CD4-positive, alpha-beta memory T cell (primary cell): ENCODE measurements at regions of chr17 and their contacts with region 1.

Region 1: GRCh38 chr17:60677308-60678124 is at the start of gene BCAS3:
- DNase-seq: peak; percentile 96 to 99 (median 97)
- H3K4me3 ChIP-seq: peak within 1 kb of the TSS; percentile 65 to 96
- H3K4me3 Mint-ChIP-seq: peak within 1 kb of the TSS; percentile 91 to 99 (median 97)
- H3K27ac ChIP-seq: peak within 1 kb of the TSS; percentile 72
- H3K27ac Mint-ChIP-seq: peak within 1 kb of the TSS; percentile 93 to 99 (median 98)
- H3K4me1 ChIP-seq: peaks cover 14% of the 10 kb centered on the region
- H3K4me1 Mint-ChIP-seq: peaks cover 17 to 26% (median 23%) of the 10 kb centered on the region in 4 donors
- H3K27me3 ChIP-seq: no peaks in the 10 kb centered on the region
- H3K27me3 Mint-ChIP-seq: no peaks in the 10 kb centered on the region
- total RNA-seq, gene BCAS3: 40.3 to 42.2 TPM

Region 2: DNA sequence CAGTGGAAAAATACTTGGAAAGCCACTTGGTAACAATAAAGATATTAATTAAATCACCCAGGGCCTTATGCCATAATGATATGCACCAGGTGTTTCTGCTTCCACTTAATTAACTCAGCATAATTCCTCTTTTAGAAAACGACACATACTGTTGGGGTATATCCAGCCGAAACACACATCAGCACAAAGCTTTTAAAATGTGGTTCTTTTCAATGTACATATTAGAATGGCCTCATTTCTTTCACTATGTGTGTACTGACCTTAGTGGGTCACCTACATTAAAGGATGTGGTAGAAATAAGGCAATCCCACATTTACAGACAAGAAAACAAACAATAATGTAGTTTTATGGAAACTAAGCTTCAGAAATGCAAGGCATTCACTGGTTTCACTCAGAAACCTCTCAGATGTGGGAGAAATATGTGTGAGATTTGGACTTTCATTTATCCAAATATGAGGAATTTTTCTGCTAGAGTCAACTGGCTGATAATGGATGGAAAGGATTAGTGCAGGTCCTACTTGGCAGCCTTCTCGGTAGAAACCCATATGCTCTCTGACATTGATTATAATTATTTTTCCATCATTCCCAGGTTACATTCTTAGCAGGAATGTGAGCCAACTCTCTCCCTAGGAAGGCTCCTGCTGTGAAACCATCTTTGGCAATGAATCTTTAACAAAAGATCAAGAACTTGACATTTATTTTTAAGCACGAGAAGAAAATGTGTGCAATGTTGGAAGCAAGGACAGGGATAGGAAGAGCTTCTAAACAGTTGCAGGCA is 1178.8 kb before region 1 on chr17:
- CTCF ChIA-PET with region 1: no interaction called
- POLR2A ChIA-PET with region 1: no interaction called
- intact Hi-C with region 1: no loop called
- DNase-seq: no peak
- H3K4me3 ChIP-seq: no peak overlapping the region
- H3K4me3 Mint-ChIP-seq: no peak overlapping the region
- H3K27ac ChIP-seq: no peak overlapping the region
- H3K27ac Mint-ChIP-seq: no peak overlapping the region
- H3K4me1 ChIP-seq: no peaks in the 10 kb centered on the region
- H3K4me1 Mint-ChIP-seq: no peaks in the 10 kb centered on the region
- H3K27me3 ChIP-seq: no peaks in the 10 kb centered on the region
- H3K27me3 Mint-ChIP-seq: peaks cover 0 to under 1% of the 10 kb centered on the region in 2 donors

Region 3: DNA sequence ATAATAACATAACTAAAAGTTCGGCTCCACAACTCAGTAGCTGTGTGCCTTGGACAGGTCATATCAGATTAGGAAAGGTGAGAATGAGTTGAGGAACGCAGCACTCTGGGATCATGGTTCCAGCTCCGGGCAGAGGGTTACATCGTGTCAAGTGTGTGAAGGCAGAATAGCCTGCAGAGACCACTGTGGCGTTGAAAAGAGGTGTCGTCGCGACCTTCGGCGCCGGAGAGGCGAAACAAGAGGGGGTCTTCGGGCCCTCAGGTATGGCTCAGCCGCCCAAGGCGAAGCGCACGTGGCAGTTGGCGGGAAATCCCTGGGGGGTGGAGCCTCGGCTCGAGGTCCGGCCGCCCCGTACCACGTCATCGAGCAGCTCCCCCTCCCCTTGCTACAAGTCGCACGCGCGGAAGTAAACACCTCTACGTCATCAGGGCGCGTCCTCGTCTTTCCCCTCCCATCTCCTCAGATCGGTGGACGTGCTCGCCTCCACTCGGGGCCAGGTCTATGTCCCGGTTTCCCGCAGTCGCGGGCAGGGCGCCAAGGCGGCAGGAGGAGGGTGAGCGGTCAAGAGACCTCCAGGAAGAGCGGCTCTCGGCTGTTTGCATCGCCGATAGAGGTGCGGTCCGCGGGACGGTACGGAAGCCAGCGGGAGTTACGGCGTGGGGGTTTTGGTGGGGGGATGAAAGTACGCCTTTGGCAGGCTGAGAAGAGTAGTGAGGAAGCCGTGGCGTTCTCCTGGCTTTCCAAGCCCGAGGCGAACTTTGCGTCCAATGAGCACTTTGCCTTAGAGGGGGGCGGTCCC is 1112.1 kb before region 1 on chr17 and contains the start of gene DHX40:
- CTCF ChIA-PET with region 1: no interaction called
- POLR2A ChIA-PET with region 1: interaction called, 3 read pairs
- intact Hi-C with region 1: loop called (anchors 10 kb)
- DNase-seq: peak; percentile 92 to 96 (median 93)
- H3K4me3 ChIP-seq: peak within 1 kb of the TSS; percentile 79 to 93
- H3K4me3 Mint-ChIP-seq: peak within 1 kb of the TSS; percentile 97 to 100 (median 100)
- H3K27ac ChIP-seq: peak within 1 kb of the TSS; percentile 93
- H3K27ac Mint-ChIP-seq: peak within 1 kb of the TSS; percentile 93 to 100 (median 100)
- H3K4me1 ChIP-seq: peaks cover 18% of the 10 kb centered on the region
- H3K4me1 Mint-ChIP-seq: peaks cover 15 to 25% (median 21%) of the 10 kb centered on the region in 4 donors
- H3K27me3 ChIP-seq: no peaks in the 10 kb centered on the region
- H3K27me3 Mint-ChIP-seq: no peaks in the 10 kb centered on the region
- total RNA-seq, gene DHX40: 25.4 to 29.9 TPM

Region 4: DNA sequence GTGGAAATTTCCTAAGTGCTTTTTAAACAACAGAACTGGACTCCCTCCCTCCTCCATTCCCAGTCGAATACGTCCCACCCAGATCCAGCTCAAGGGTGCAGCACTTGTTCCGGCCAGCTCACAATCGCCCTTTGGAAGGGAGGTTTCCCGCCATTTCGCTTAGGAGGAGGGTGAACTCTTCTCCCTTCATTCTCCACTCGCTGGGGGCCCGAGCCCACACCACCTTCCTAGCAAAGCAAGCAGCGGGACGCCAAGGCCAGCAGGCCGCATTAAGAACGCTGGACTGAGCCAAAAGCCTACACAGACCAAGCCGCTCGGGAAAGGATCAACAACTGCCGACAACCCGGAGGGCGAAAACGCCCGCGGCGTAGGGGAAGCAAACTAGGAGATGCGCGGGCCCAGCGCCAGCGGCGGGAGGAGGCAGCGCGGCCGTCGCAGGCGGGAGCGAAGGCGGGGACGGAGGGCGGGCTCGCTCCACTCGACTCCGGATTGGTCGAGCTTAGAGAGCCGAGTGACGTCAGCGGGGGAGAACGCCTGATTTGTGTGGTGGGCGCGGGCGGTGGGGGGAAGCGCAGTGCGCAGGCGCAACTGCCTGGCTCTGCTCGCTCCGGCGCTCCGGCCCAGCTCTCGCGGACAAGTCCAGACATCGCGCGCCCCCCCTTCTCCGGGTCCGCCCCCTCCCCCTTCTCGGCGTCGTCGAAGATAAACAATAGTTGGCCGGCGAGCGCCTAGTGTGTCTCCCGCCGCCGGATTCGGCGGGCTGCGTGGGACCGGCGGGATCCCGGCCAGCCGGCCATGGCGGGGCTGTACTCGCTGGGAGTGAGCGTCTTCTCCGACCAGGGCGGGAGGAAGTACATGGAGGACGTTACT is 77.7 kb before region 1 on chr17 and contains the start of gene PPM1D:
- CTCF ChIA-PET with region 1: no interaction called
- POLR2A ChIA-PET with region 1: interaction called, 24 read pairs
- intact Hi-C with region 1: loop called (anchors 1 kb)
- DNase-seq: peak; percentile 96 to 97 (median 96)
- H3K4me3 ChIP-seq: peak within 1 kb of the TSS; percentile 97 to 98
- H3K4me3 Mint-ChIP-seq: peak within 1 kb of the TSS; percentile 95 to 99 (median 98)
- H3K27ac ChIP-seq: peak within 1 kb of the TSS; percentile 94
- H3K27ac Mint-ChIP-seq: peak within 1 kb of the TSS; percentile 97 to 98 (median 98)
- H3K4me1 ChIP-seq: peaks cover 37% of the 10 kb centered on the region
- H3K4me1 Mint-ChIP-seq: peaks cover 25 to 57% (median 38%) of the 10 kb centered on the region in 4 donors
- H3K27me3 ChIP-seq: no peaks in the 10 kb centered on the region
- H3K27me3 Mint-ChIP-seq: no peaks in the 10 kb centered on the region
- total RNA-seq, gene PPM1D: 18.9 to 19.4 TPM

Region 5: GRCh38 chr17:60712675-60713074 is 35.2 kb after region 1 on chr17:
- CTCF ChIA-PET with region 1: no interaction called
- POLR2A ChIA-PET with region 1: no interaction called
- intact Hi-C with region 1: no loop called
- DNase-seq: no peak
- H3K4me3 ChIP-seq: no peak overlapping the region
- H3K4me3 Mint-ChIP-seq: no peak overlapping the region
- H3K27ac ChIP-seq: no peak overlapping the region
- H3K27ac Mint-ChIP-seq: peak overlapping the region in 1 of 7 donors; percentile 53
- H3K4me1 ChIP-seq: no peaks in the 10 kb centered on the region
- H3K4me1 Mint-ChIP-seq: no peaks in the 10 kb centered on the region
- H3K27me3 ChIP-seq: no peaks in the 10 kb centered on the region
- H3K27me3 Mint-ChIP-seq: no peaks in the 10 kb centered on the region